AG04449 (cell line): ENCODE measurements at regions of chr19 and their contacts with region 1.

Region 1: DNA sequence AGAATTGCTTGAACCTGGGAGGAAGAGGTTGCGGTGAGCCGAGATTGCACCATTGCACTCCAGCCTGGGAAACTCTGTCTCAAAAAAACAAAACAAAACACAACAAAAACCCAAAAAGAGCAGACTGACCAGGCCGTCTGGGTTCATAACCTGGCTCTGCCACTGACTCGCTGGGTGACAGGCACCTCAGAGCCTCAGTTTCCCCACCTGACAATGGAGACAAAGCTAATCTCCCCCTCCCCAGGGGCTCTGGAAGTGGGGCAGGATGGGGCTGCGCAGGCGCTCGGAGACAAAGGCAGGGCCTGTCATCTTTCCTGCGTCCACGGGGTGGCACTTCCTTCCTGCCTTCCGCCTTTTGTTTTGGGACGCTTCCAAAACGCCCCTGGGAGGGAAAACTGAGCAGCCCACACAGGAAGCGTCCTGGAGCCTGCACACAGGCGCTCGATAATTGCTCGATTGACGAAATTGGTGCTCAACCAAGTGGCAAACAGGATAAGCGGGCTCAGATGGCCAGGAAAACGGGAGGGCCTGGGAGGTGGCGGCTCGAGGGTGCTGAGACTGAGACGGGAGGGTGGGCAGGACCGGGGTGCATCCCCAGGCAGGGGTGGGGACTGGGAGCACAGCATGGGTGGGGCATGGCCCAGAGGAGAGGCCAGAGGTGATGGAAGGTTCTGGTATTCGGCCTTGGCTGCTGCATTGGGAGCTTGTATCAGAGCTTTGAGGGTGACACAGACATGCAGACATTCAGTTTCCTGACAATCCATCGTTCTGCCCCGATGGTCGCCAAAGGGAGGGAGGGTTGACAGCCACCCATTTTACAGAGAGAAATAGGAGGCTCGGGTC is 17.8 kb downstream of the SPC24 start:
- DNase-seq: no peak
- H3K4me3 ChIP-seq: peak overlapping the region; percentile 31
- CTCF ChIP-seq: peak; percentile 84

Region 2: GRCh38 chr19:10968527-10969135 is 169.1 kb before region 1 on chr19:
- CTCF ChIA-PET with region 1: no interaction called
- POLR2A ChIA-PET with region 1: no interaction called
- DNase-seq: no peak
- H3K4me3 ChIP-seq: no peak overlapping the region
- CTCF ChIP-seq: no peak

Region 3: GRCh38 chr19:10998045-10998533 is 139.7 kb before region 1 on chr19:
- CTCF ChIA-PET with region 1: no interaction called
- POLR2A ChIA-PET with region 1: no interaction called
- DNase-seq: no peak
- H3K4me3 ChIP-seq: no peak overlapping the region
- CTCF ChIP-seq: no peak

Region 4: GRCh38 chr19:11078893-11079292 is 58.9 kb before region 1 on chr19:
- CTCF ChIA-PET with region 1: no interaction called
- POLR2A ChIA-PET with region 1: no interaction called
- DNase-seq: no peak
- H3K4me3 ChIP-seq: no peak overlapping the region
- CTCF ChIP-seq: no peak

Region 5: GRCh38 chr19:11155373-11156120 is 17.8 kb after region 1 on chr19 and contains the start of gene SPC24:
- CTCF ChIA-PET with region 1: interaction called, 10 read pairs
- POLR2A ChIA-PET with region 1: interaction called, 4 read pairs
- DNase-seq: peak; percentile 91
- H3K4me3 ChIP-seq: peak within 1 kb of the TSS; percentile 93
- CTCF ChIP-seq: peak; percentile 3

Region 6: DNA sequence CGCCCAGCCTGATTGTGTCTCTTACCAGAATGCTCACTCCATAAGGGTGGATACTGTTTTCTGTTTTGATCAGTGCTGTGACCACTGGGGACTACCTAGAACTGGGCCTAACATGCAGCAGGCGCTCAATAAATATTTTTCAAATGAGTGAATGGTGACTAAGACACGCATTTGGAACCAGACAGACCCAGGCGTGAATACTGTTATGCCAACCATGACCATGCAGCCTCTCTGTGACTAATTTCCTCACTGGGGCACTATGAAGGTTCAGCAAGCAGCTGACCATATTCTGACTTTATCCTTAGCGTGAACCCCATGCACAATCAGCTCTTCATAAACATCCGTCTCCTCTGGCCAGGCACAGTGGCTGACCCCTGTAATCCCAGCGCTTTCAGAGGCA is 30.8 kb after region 1 on chr19:
- CTCF ChIA-PET with region 1: interaction called, 3 read pairs
- POLR2A ChIA-PET with region 1: interaction called, 11 read pairs
- DNase-seq: peak; percentile 82
- H3K4me3 ChIP-seq: no peak overlapping the region
- CTCF ChIP-seq: no peak

Region 7: DNA sequence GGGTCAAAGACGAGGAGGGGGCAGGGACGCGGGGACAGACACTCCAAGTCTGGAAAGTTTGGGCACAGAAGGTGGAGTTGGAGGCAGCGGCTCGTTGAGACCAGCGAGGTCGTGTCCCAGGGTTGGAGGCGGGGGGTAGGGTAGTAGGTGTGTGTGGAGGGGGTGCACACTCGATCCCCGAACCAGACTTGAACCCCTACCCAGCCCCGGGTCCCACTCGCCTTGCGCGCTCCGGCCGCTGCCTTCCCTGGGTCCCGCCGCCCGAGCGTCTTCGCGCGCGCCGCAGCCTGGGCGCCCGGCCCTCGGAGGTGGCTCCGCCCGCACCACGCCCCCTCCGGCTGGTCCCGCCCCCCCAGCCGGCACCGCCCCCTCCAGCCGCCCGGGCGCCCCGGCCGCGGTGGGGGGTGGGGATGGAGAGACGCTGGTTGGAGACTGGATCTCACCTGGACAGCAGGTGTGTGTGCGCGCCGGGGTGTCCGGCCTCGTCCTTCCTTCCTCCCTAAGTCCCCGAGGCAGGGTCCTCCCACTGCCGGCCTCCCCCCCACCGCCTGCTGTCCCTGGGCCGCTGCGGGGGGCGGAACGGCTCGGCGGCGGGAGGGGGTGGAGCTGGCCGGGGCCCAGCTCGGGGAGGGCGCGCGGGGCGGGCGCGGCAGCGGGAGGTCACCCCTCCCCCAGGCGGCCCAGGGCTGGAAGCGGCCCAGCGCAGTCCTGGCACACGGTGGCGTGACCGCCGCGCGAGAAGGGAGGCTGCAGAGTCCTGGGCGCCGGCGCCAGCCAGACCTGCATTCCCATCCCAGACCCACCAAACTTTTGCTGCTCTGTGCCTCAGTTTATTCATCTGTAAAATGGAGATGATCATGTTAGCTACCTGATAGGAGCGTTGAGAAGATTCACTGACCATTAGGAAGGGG is 59.8 kb after region 1 on chr19 and contains the start of gene KANK2:
- CTCF ChIA-PET with region 1: interaction called, 15 read pairs
- POLR2A ChIA-PET with region 1: interaction called, 4 read pairs
- DNase-seq: no peak
- H3K4me3 ChIP-seq: peak within 1 kb of the TSS; percentile 95
- CTCF ChIP-seq: no peak

Region 8: DNA sequence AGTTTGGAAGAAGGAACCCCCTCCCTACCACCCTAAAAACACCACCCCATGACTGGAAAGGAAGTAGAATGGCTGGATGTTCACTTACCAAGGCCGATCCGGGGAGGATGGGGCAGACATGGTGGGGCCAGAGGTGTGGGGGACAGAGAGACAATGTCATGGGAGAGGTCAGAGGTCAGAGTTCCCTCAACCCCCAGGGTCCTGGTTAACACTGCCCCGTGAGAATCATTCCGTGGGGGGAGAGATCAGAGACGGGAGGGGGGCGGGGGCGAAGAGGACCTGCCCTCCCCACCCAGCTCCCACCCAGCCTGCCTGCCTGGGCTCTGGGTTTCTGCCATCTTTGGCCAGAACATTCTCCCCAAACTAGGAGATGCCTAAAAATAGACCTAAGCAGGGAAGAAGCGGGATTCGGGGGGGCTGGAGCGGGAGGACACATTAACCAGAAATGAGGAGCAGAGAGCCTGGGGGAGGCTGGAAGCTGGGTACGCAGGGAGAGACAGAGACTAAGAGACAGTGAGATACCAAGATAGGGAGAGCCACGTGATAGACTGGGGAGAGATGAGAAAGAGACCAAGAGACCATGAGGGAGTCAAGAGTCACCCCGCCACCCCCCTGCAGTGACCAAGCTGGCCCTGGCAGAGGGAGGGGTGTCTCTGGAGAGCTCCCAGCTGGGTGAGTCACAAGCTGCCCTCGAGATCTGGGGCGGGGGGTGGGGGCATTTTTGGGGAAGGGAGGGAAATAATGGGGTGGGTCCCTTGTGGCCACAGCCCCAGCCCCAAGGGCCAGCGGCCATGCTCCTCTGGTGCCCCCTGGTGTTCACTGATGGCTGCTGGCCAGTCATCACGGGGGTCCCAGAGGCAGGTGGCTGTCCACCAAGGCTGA is 65.7 kb after region 1 on chr19:
- CTCF ChIA-PET with region 1: interaction called, 119 read pairs
- POLR2A ChIA-PET with region 1: interaction called, 12 read pairs
- DNase-seq: peak; percentile 34
- H3K4me3 ChIP-seq: no peak overlapping the region
- CTCF ChIP-seq: peak; percentile 91